ENCODE measurements at regions of chr12 and their contacts with region 1.

Region 1: GRCh38 chr12:48851883-48852733 is at the start of gene DDX23:
- DNase-seq: peak; percentile 96
- H3K4me3 Mint-ChIP-seq: peak within 1 kb of the TSS; percentile 97
- H3K27ac Mint-ChIP-seq: peak within 1 kb of the TSS; percentile 97
- H3K4me1 Mint-ChIP-seq: peaks cover 31% of the 10 kb centered on the region
- H3K27me3 Mint-ChIP-seq: no peaks in the 10 kb centered on the region
- total RNA-seq, gene DDX23: 119 to 121 TPM

Region 2: GRCh38 chr12:48814262-48815125 is 37.6 kb before region 1 on chr12:
- CTCF ChIA-PET with region 1: interaction called, 36 read pairs
- POLR2A ChIA-PET with region 1: interaction called, 7 read pairs
- intact Hi-C with region 1: loop called (anchors 2 kb)
- DNase-seq: peak; percentile 89
- H3K4me3 Mint-ChIP-seq: peak overlapping the region; percentile 88
- H3K27ac Mint-ChIP-seq: no peak overlapping the region
- H3K4me1 Mint-ChIP-seq: peaks cover 29% of the 10 kb centered on the region
- H3K27me3 Mint-ChIP-seq: peaks cover 7% of the 10 kb centered on the region

Region 3: DNA sequence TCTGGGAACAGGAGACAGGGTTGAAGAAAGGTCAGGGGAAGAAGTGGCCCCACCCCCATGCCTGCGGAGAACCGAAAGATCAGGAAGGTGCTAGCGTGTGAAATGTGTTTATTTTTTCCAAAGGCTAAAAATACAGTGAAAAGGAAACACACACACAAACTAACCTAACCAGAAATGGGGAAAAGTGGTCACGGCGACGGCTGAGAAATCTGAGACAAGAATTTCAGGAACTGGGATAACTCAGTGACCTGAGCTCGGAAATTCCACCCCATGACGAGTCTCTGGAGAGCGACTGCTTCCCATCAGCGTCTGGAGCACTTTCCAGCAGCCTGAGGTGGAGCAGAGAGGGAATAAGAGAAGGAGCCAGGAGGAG is 30.2 kb after region 1 on chr12:
- CTCF ChIA-PET with region 1: interaction called, 22 read pairs
- POLR2A ChIA-PET with region 1: interaction called, 3 read pairs
- intact Hi-C with region 1: no loop called
- DNase-seq: no peak
- H3K4me3 Mint-ChIP-seq: no peak overlapping the region
- H3K27ac Mint-ChIP-seq: no peak overlapping the region
- H3K4me1 Mint-ChIP-seq: peaks cover 4% of the 10 kb centered on the region
- H3K27me3 Mint-ChIP-seq: peaks cover 21% of the 10 kb centered on the region

Region 4: GRCh38 chr12:48924617-48925303 is 72.7 kb after region 1 on chr12:
- CTCF ChIA-PET with region 1: interaction called, 41 read pairs
- POLR2A ChIA-PET with region 1: no interaction called
- intact Hi-C with region 1: loop called (anchors 1 kb)
- DNase-seq: peak; percentile 82
- H3K4me3 Mint-ChIP-seq: peak overlapping the region; percentile 88
- H3K27ac Mint-ChIP-seq: peak overlapping the region; percentile 94
- H3K4me1 Mint-ChIP-seq: peaks cover 47% of the 10 kb centered on the region
- H3K27me3 Mint-ChIP-seq: no peaks in the 10 kb centered on the region

Region 5: DNA sequence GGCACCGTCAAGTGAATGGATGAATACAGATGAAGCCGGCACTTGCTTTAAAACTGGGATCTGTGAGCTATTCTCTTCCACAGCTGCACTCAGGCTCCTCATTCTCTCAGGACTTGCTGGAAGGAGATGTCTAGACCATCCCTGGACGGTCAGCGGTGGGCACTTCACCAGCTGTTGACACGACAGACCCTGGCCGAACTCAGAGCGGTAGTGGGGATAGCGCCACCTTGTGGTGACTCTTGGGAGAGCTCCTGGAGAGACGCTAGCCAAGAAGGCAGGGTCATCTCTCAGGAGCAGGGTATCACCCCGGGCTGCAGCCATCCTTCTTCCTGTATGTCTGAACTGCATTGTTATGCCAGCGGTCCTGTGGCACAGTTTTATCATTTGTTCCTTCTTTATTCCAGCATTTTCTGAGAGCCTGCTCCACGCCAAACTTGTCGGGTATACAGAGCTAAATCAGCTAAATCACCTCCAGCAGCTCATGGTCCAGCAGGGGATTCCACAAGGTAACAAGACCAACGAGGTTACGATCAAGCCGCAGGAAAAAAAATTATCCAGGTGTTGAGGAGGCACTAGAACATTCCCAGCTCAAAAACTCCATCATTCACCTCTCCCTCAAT is 136.0 kb after region 1 on chr12:
- CTCF ChIA-PET with region 1: interaction called, 37 read pairs
- POLR2A ChIA-PET with region 1: no interaction called
- intact Hi-C with region 1: loop called (anchors 2 kb)
- DNase-seq: peak; percentile 86
- H3K4me3 Mint-ChIP-seq: no peak overlapping the region
- H3K27ac Mint-ChIP-seq: no peak overlapping the region
- H3K4me1 Mint-ChIP-seq: peaks cover 5% of the 10 kb centered on the region
- H3K27me3 Mint-ChIP-seq: peaks cover 24% of the 10 kb centered on the region

Region 6: DNA sequence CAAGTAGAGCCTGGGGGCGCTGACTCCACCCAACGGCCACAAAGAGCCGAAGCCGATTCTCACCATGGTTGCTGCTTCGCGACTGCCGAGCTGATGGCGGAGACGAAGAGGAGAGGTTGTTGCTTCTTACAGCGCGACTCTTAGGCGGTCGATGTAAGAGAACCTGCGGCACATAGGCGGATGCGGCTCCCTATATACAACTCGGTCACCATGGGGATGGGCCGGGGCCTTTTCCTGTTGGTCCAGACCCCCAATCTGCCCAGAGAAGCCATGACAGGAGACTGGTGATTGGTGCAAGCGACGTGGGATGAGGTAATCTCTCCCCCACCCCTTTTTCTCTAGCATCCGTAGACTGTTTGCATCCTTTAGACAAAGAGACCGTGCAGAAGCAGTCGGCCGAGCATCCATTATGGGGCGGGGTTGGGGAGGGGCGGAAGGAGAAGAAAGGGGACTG is 336.8 kb after region 1 on chr12 and contains the start of gene TUBA1A:
- CTCF ChIA-PET with region 1: no interaction called
- POLR2A ChIA-PET with region 1: no interaction called
- intact Hi-C with region 1: loop called (anchors 1 kb)
- DNase-seq: peak; percentile 97
- H3K4me3 Mint-ChIP-seq: peak within 1 kb of the TSS; percentile 90
- H3K27ac Mint-ChIP-seq: peak within 1 kb of the TSS; percentile 95
- H3K4me1 Mint-ChIP-seq: peaks cover 16% of the 10 kb centered on the region
- H3K27me3 Mint-ChIP-seq: no peaks in the 10 kb centered on the region
- total RNA-seq, gene TUBA1A: 86.4 to 88.7 TPM